ENCODE measurements at regions of chr18 and their contacts with region 1.

Region 1: GRCh38 chr18:12079491-12080237 is 14.0 kb upstream of the ANKRD62 start:
- DNase-seq: no peak
- ATAC-seq: no peak
- H3K4me3 ChIP-seq: no peak overlapping the region
- H3K27ac ChIP-seq: no peak overlapping the region
- H3K4me1 ChIP-seq: no peaks in the 10 kb centered on the region
- H3K27me3 ChIP-seq: no peaks in the 10 kb centered on the region
- CTCF ChIP-seq: no peak
- POLR2A ChIP-seq: no peak

Region 2: DNA sequence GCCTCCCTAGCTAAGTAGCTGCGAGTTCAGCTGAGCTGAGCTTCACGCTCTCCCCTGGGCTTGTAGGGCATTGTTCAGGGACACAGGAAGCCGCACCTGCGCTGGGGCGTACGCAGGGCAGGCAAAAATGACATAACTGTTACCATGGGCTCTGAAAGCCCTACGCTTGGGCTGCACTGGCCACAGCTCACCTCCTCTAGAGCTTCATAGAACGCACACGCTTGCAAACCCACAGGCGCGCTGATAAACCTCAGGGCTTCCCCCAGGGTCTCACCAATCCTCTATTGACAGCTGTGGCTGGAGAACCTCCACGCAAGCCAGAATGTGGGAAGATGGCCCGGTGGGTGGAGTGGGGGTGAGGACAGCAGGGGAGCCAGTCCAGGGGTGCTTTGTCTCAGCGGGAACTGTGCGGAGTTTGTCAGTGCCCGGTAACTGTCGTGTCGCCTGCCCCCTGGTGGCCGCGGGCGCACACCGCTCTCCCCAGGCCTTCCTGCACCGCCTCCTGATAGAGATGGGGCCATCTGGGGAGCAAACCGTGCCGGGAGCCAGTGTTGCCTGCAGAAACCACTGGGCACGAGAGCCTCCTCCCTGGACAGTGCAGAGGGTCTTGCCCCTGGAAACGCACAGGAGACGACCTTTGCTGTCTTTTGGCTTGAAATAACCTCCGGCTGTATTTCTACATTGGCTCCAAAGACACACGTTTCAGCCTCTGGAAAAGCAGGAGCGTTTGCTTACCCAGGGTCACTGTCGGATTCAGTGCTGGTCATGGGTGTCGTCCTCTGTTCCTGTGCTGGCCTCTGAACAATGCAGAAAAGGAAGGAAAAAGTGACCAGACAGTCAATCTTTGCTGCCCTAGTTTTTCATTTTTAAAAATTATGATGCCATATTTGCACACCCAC is 157.5 kb after region 1 on chr18:
- intact Hi-C with region 1: loop called (anchors 10 kb)
- DNase-seq: peak; percentile 78 to 87 (median 82)
- ATAC-seq: peak; percentile 97
- H3K4me3 ChIP-seq: no peak overlapping the region
- H3K27ac ChIP-seq: no peak overlapping the region
- H3K4me1 ChIP-seq: peaks cover 5% of the 10 kb centered on the region
- H3K27me3 ChIP-seq: no peaks in the 10 kb centered on the region
- CTCF ChIP-seq: peak; percentile 84 to 97 (median 90)
- POLR2A ChIP-seq: no peak